ENCODE measurements at regions of chr15 and their contacts with region 1.

Region 1: DNA sequence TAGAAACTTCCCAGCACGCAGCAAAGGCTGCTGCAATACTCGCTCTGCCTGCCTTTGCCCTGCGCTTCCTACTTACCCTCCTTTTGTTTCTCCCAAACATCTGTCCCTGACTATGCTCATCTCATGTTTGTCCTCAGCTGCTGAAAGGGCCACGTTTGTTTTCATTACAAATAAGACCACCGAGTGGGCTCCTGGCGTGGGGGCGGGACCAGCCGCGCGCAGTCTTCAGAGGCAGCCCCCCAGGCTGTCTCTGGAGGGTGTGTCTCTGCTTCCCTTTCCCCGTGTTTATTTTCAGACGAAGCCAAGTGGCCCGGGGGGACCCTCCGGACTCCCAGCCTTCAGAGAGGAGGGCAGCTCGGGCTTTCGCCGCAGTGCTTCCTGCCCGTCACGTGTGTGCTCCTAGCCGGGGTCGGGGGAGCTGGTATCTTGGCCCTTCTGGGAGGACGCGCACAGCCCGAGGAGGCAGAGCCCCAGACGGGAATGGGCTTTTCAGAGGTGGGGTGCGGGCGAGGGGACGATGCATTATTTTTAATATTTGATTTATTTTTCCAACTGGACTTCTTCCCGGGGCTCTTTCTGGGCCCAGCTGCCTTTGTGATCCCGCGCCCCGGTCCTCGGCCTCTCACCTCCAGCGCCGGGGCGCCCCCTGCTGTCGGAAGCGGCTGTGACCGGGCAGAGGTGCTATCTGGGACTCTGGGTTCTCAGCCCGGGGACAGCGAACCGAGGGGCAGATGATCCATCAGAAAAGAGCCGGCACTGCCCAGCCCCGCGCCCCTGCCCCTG is 70.0 kb upstream of the CGNL1 start:
- DNase-seq: peak; percentile 72 to 100 (median 89)
- ATAC-seq: peak; percentile 91 to 98 (median 97)
- H3K4me3 ChIP-seq: peak overlapping the region; percentile 15 to 48 (median 32)
- H3K27ac ChIP-seq: no peak overlapping the region
- H3K4me1 ChIP-seq: no peaks in the 10 kb centered on the region
- H3K27me3 ChIP-seq: no peaks in the 10 kb centered on the region
- CTCF ChIP-seq: peak; percentile 78 to 94 (median 87)

Region 2: DNA sequence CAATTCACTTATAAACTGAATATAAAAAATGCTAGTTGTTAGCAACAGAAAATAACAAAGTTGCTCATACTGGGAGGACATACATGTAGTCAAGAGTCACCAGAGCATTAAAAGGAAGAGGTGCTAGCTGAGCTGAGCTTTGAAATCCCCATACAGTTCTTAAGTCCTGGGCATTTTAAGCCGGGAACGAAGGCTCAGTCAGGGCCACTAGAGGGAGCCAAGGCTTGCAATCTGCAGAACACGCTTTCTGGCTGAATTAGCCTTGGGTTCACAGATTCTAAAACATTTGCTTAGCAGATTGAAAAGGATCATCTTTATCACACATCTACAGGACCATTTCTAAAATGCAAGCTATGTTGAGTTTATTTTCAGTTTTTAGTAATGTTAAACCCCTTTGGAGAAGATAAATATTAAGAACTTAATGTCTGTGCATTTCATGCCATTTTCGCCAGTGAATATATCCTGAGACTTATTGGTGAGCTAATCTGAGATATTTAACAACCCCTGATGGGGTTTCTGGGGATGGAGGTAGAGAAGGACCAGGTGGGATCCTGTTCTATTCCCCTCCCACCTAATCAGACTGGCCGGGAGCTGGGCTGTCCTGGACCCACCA is 815.1 kb before region 1 on chr15:
- intact Hi-C with region 1: loop called in 2 of 3 experiments (anchors 10 kb)
- DNase-seq: peak in 5 of 6 donors; percentile 29 to 67 (median 43)
- ATAC-seq: peak; percentile 75 to 95 (median 90)
- H3K4me3 ChIP-seq: no peak overlapping the region
- H3K27ac ChIP-seq: no peak overlapping the region
- H3K4me1 ChIP-seq: no peaks in the 10 kb centered on the region
- H3K27me3 ChIP-seq: no peaks in the 10 kb centered on the region
- CTCF ChIP-seq: peak; percentile 59 to 74 (median 66)

Region 3: DNA sequence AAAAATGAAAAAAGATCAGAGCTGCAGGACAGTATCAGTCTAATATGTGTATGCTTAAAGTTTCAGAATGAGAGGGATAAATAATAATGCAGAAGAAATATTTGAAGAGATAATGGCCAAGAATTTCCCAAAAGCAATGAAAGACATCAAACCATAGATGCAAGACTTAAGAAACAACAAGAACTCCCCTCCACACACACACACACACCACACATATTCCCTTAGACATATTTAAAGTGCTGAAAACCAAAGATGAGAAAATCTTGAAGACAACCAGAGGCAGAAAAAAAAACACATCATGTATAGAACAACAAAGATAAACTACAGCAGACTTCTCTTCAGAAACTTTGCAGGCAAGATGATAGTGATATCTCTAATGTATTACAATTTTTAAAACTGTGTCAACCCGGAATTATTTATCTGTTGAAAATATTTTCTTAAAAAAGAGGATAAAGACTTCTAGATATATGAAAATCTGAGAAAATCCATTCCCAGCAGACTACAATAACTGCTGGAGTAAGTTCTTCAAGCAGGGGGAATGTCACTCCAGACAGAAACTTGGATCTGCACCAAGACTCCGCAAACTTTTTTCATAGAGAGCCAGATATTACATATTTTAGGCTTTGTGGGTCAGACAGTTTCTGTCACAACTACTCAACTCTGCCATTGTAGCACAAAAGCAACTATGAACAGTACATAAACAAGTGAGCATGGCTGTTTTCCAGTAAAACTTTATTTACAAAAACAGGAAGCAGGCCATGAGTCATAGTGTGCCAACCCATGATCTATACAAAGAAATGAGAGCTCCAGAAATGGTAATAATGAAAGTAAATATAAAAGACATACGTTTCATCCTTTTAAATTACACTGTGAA is 153.4 kb before region 1 on chr15:
- intact Hi-C with region 1: loop called in 2 of 3 experiments (anchors 5 kb)
- DNase-seq: no peak
- ATAC-seq: peak in 3 of 4 donors; percentile 19 to 71 (median 44)
- H3K4me3 ChIP-seq: no peak overlapping the region
- H3K27ac ChIP-seq: no peak overlapping the region
- H3K4me1 ChIP-seq: peaks cover 0 to 8% (median 0%) of the 10 kb centered on the region in 3 donors
- H3K27me3 ChIP-seq: no peaks in the 10 kb centered on the region
- CTCF ChIP-seq: no peak

Region 4: DNA sequence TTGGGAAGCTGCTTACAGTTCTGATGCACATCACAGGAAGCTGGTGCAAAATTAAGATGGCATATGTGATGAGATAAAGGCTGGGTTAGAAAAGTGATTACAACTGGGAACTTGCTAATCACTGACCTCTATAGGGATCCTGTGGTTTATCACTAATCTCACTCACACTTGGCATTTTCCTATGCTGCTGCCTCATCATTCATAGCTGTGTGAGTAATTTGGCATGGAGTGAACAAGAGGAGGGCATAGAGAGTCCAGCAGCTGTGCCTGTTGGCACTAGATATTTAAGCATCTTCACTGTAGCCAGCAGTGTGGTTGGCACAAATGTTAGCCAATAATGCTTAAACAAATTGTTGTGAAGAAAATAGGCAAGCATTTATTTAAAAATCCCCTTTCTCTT is 147.8 kb before region 1 on chr15:
- intact Hi-C with region 1: loop called in 2 of 3 experiments (anchors 5 kb)
- DNase-seq: no peak
- ATAC-seq: peak in 3 of 4 donors; percentile 36 to 63 (median 42)
- H3K4me3 ChIP-seq: no peak overlapping the region
- H3K27ac ChIP-seq: no peak overlapping the region
- H3K4me1 ChIP-seq: no peaks in the 10 kb centered on the region
- H3K27me3 ChIP-seq: no peaks in the 10 kb centered on the region
- CTCF ChIP-seq: no peak

Measured in pancreas (tissue), 10 donors.